ENCODE measurements at regions of chr1 and their contacts with region 1.

Region 1: DNA sequence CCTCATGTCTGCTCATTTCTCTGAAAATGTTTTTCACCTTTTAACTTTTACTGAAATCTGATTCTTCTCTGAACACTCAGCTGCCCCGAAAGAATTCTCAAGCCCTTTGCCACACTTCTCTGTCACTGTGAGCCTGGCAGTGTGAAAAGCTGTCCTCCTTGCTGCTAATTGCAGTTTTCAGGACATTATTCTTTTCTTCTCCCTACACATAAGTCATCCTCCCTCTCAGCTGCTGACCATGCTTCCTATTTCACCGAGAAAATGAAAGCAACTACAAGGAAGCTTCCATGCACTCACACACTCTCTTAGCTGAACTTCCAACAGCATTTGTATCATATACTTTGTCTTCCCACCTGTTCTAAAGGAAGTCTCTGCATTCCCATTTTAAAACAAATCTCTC is 15.8 kb downstream of the OLFM3 start:
- DNase-seq: no peak
- H3K4me3 ChIP-seq: no peak overlapping the region
- H3K27ac ChIP-seq: no peak overlapping the region
- H3K4me1 ChIP-seq: no peaks in the 10 kb centered on the region
- H3K27me3 ChIP-seq: no peaks in the 10 kb centered on the region
- CTCF ChIP-seq: no peak
- EP300 ChIP-seq: no peak
- POLR2A ChIP-seq: no peak
- RAD21 ChIP-seq: no peak

Region 2: GRCh38 chr1:101996825-101997465 is 16.0 kb after region 1 on chr1 and contains the start of gene OLFM3:
- CTCF ChIA-PET with region 1: interaction called, 13 read pairs
- POLR2A ChIA-PET with region 1: no interaction called
- DNase-seq: peak; percentile 43 to 81
- H3K4me3 ChIP-seq: peak within 1 kb of the TSS; percentile 48 to 70 (median 52); a peak in 7 of 8 replicates
- H3K27ac ChIP-seq: no peak within 1 kb of the TSS
- H3K4me1 ChIP-seq: no peaks in the 10 kb centered on the region
- H3K27me3 ChIP-seq: no peaks in the 10 kb centered on the region
- CTCF ChIP-seq: no peak
- EP300 ChIP-seq: no peak
- POLR2A ChIP-seq: no peak
- RAD21 ChIP-seq: peak; percentile 14 to 36; a peak in 3 of 4 replicates
- total RNA-seq, gene OLFM3: 0.32 and 0.73 TPM in 2 replicates

Measured in H1 (cell line).